IMR-90 (cell line): ENCODE measurements at regions of chr12 and their contacts with region 1.

Region 1: GRCh38 chr12:53220801-53221202 is 11.2 kb downstream of the RARG start:
- DNase-seq: peak; percentile 90
- ATAC-seq: peak; percentile 68
- H3K4me3 ChIP-seq: peak overlapping the region; percentile 53
- H3K27ac ChIP-seq: peak overlapping the region; percentile 94
- H3K4me1 ChIP-seq: peaks cover 48% of the 10 kb centered on the region
- H3K27me3 ChIP-seq: no peaks in the 10 kb centered on the region
- CTCF ChIP-seq: no peak
- POLR2A ChIP-seq: no peak
- RAD21 ChIP-seq: no peak

Region 2: DNA sequence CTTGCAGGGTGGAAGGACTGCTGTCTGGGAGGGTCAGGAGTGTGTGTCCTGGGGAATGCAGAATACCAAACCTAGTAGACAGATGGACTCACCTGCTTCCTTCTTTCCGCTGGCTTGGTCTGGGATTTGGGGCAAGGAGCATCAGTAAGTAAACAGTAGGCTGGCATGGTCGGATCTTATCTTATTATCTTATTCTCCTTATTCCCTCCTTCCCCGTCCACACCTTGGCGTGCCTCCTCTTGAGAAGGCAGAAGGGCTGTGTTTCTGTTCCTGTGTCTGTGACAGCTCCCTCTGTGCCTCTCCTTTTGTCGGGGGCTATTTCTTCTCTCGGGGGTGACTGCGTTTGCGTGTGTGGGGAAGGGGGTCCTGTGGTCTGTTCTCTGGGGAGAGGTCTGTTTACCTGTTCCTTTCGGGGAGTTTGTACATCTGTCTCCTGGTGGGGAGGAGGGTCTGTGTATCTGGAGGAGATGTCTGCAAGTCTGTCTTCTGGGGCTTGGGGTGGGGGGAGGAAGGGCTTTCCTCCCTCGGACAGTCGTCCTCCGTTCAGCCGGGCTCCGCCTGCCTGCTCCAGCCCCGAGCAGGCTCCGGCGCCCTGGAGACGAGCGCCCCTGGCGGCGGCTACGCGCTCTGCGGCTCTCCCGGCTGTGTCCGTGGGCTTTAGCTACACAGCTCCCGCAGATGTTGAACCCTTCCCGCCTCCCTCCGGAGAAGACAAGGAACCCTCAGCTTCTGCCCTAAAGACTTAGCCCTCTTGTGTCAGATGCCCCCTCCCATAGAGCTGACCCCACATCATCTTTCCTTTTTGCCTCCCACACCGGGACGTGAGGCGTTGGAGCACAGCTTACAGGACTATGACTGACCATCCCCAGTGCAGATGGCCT is 942.0 kb before region 1 on chr12:
- CTCF ChIA-PET with region 1: no interaction called
- POLR2A ChIA-PET with region 1: no interaction called
- dilution Hi-C with region 1: no loop called
- in situ Hi-C with region 1: no loop called
- intact Hi-C with region 1: no loop called
- DNase-seq: peak; percentile 65
- ATAC-seq: peak; percentile 88
- H3K4me3 ChIP-seq: no peak overlapping the region
- H3K27ac ChIP-seq: peak overlapping the region; percentile 91
- H3K4me1 ChIP-seq: peaks cover 24% of the 10 kb centered on the region
- H3K27me3 ChIP-seq: peaks cover 2% of the 10 kb centered on the region; the same call in 1 of the 2 replicates
- CTCF ChIP-seq: peak; percentile 97
- POLR2A ChIP-seq: 0 out of 2 replicates have a peak, but pooled peaks have one; percentile 35
- RAD21 ChIP-seq: peak; percentile 88

Region 3: GRCh38 chr12:52813885-52814711 is 406.7 kb before region 1 on chr12 and contains the start of gene KRT4:
- CTCF ChIA-PET with region 1: no interaction called
- POLR2A ChIA-PET with region 1: no interaction called
- dilution Hi-C with region 1: no loop called
- in situ Hi-C with region 1: no loop called
- intact Hi-C with region 1: no loop called
- DNase-seq: no peak
- ATAC-seq: peak; percentile 72
- H3K4me3 ChIP-seq: no peak within 1 kb of the TSS
- H3K27ac ChIP-seq: no peak within 1 kb of the TSS
- H3K4me1 ChIP-seq: peaks cover 6% of the 10 kb centered on the region
- H3K27me3 ChIP-seq: peaks cover 43% of the 10 kb centered on the region
- CTCF ChIP-seq: no peak
- POLR2A ChIP-seq: no peak
- RAD21 ChIP-seq: no peak
- total RNA-seq, gene KRT4: under 0.01 TPM in 1 of 2 replicates, not detected in the other

Region 4: DNA sequence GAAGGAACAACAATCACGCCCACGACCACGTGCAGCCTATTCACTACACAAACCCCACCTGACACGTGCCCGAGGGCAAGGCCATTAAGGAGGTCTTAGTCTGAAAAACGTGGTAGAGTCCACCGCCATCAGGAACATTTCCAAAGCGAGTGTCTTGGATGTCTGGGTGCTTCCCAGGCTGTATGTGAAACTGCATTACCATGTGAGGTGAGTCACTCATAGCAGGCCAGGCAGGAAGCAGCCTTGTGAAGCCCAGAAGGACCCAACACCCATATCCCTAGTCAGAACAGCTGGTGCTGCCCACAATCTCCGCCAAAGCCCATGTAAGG is 383.4 kb before region 1 on chr12:
- CTCF ChIA-PET with region 1: no interaction called
- POLR2A ChIA-PET with region 1: no interaction called
- dilution Hi-C with region 1: no loop called
- in situ Hi-C with region 1: no loop called
- intact Hi-C with region 1: no loop called
- DNase-seq: peak; percentile 91
- ATAC-seq: peak; percentile 78
- H3K4me3 ChIP-seq: no peak overlapping the region
- H3K27ac ChIP-seq: no peak overlapping the region; the same call in 1 of the 2 replicates
- H3K4me1 ChIP-seq: peaks cover 18% of the 10 kb centered on the region
- H3K27me3 ChIP-seq: peaks cover 8% of the 10 kb centered on the region
- CTCF ChIP-seq: no peak
- POLR2A ChIP-seq: no peak
- RAD21 ChIP-seq: no peak

Region 5: DNA sequence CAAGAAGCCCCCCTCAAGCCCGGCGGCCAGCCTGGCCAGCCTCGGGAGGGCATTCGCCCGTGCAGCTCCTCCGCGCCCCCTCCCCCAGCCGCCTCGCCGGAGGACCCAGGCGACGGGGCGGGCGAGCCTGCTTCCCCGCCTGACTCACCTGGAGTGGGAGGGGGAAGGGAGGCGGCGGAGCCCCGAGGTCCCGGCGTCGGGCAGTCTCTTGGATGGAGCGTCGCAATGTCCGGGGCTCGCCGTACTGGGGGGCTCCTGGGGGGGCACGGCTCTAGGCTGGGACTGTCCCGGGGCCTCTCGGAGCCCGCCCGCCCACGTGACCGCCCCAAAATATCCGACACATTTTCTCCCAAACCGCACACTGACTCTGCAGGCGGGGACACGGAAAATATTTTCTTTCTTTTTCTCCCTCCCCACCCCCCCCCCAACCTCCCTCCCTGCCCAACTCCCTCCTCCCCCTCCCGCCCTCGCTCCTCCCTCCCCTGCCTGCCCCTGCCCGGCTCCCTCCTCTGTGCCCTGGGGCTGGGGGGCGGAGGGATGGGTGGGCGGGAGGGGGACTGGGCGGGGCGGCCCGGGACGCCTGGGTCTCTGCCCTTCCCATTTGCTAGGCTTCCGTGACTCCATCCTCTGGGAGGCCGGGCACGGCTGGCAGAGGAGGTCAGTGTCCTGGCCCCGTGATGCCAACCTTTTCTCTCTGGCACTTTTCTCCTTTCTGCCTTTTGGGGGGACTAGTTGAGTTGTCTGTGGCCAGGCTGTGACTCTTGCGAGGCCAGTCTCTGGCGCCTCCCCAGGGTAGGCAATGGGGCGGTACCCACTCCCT is 11.2 kb after region 1 on chr12 and contains the start of gene RARG:
- CTCF ChIA-PET with region 1: no interaction called
- POLR2A ChIA-PET with region 1: interaction called, 3 read pairs
- dilution Hi-C with region 1: no loop called
- in situ Hi-C with region 1: no loop called
- intact Hi-C with region 1: loop called (anchors 1 kb)
- DNase-seq: no peak
- ATAC-seq: peak; percentile 82
- H3K4me3 ChIP-seq: peak within 1 kb of the TSS; percentile 52
- H3K27ac ChIP-seq: peak within 1 kb of the TSS; percentile 42
- H3K4me1 ChIP-seq: peaks cover 24% of the 10 kb centered on the region
- H3K27me3 ChIP-seq: peaks cover 20% of the 10 kb centered on the region
- CTCF ChIP-seq: no peak
- POLR2A ChIP-seq: no peak
- RAD21 ChIP-seq: no peak
- total RNA-seq, gene RARG: 7.5 and 7.9 TPM in 2 replicates

Region 6: DNA sequence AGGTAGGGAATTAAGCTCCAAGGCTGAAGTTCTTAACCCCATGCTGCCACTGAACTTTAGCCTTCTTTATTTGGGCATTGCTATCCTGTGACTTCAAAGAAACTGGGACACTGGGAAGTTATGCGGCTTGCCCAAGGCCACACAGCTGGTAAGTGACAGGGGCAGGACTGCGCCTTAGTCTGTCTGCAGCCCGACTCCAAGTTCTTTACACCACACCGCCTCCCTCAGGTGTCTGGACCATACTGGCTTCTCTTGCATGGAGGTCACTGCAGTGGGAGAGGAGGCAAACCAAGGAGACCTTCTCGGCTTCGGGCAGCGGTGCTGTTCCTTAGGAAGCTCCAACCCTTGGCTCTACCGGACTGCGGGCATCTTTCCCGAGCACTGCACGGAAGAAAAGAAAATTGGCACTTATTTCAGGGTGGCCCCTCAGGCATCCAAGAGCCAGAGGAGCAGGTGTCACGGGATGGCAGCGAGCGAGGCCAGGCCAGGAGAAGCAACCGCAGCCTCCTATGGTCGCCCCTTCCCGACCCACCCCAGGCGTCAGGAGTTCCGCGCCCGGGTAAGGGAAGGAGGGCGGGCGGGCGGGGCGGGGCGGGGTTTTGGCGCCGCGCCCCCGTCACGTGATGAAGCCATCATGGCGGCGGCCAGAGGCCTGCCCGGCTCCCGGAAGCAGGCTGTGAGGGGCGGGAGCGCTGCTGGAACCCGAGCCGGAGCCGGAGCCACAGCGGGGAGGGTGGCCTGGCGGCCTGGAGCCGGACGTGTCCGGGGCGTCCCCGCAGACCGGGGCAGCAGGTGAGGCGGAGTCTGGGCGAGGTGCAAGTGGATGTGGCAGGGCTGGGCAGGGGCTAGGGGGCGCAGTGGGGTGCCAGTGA is 30.9 kb after region 1 on chr12:
- CTCF ChIA-PET with region 1: interaction called, 3 read pairs
- POLR2A ChIA-PET with region 1: interaction called, 7 read pairs
- dilution Hi-C with region 1: no loop called
- in situ Hi-C with region 1: no loop called
- intact Hi-C with region 1: loop called (anchors 1 kb)
- DNase-seq: peak; percentile 64
- ATAC-seq: peak; percentile 91
- H3K4me3 ChIP-seq: peak overlapping the region; percentile 85
- H3K27ac ChIP-seq: peak overlapping the region; percentile 93
- H3K4me1 ChIP-seq: peaks cover 11% of the 10 kb centered on the region
- H3K27me3 ChIP-seq: no peaks in the 10 kb centered on the region
- CTCF ChIP-seq: peak; percentile 41
- POLR2A ChIP-seq: peak; percentile 67
- RAD21 ChIP-seq: peak; percentile 51

Region 7: DNA sequence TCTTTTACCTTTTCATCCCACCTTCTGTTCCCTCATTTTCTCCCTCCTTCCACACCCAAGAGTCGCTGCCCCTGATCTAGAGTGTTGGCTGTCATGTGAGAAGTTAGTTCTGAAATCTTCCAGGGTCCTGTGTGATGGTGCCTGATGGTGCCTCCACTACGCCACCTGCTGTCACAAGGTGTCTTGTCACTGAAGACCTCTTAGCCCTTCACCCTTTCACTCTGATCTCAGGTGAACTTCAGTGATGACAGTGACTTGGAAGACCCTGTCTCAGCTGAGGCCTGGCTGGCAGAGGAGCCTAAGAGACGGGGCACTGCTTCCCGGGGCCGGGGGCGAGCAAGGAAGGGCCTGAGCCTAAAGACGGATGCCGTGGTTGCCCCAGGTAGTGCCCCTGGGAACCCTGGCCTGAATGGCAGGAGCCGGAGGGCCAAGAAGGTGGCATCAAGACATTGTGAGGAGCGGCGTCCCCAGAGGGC is 67.0 kb after region 1 on chr12:
- CTCF ChIA-PET with region 1: interaction called, 3 read pairs
- POLR2A ChIA-PET with region 1: no interaction called
- dilution Hi-C with region 1: no loop called
- in situ Hi-C with region 1: no loop called
- intact Hi-C with region 1: loop called (anchors 1 kb)
- DNase-seq: peak; percentile 61
- ATAC-seq: peak; percentile 84
- H3K4me3 ChIP-seq: no peak overlapping the region
- H3K27ac ChIP-seq: no peak overlapping the region
- H3K4me1 ChIP-seq: peaks cover 22% of the 10 kb centered on the region
- H3K27me3 ChIP-seq: no peaks in the 10 kb centered on the region
- CTCF ChIP-seq: peak; percentile 71
- POLR2A ChIP-seq: no peak
- RAD21 ChIP-seq: peak; percentile 75

Region 8: GRCh38 chr12:53295070-53295890 is 74.5 kb after region 1 on chr12 and contains the start of gene PFDN5:
- CTCF ChIA-PET with region 1: interaction called, 3 read pairs
- POLR2A ChIA-PET with region 1: interaction called, 4 read pairs
- dilution Hi-C with region 1: no loop called
- in situ Hi-C with region 1: no loop called
- intact Hi-C with region 1: loop called (anchors 2 kb)
- DNase-seq: peak; percentile 92
- ATAC-seq: peak; percentile 83
- H3K4me3 ChIP-seq: peak within 1 kb of the TSS; percentile 92
- H3K27ac ChIP-seq: peak within 1 kb of the TSS; percentile 95
- H3K4me1 ChIP-seq: peaks cover 20% of the 10 kb centered on the region
- H3K27me3 ChIP-seq: no peaks in the 10 kb centered on the region
- CTCF ChIP-seq: no peak
- POLR2A ChIP-seq: peak; percentile 92
- RAD21 ChIP-seq: no peak
- total RNA-seq, gene PFDN5: 764 and 1,011 TPM in 2 replicates